Activated CD4-positive, alpha-beta T cell treated with anti-CD3 and anti-CD28 coated beads, Interleukin-2, amount 10 ng/mL, durations not matched to agents 7 days and 5 days (primary cell): ENCODE measurements at regions of chr4 and their contacts with region 1.

Region 1: GRCh38 chr4:75514131-75514948 is at the starts of genes RCHY1 and THAP6:
- DNase-seq: peak; percentile 95
- H3K4me3 Mint-ChIP-seq: no peak within 1 kb of the TSS
- H3K27ac Mint-ChIP-seq: peak within 1 kb of the TSS; percentile 99
- H3K4me1 Mint-ChIP-seq: peaks cover 46% of the 10 kb centered on the region
- H3K27me3 Mint-ChIP-seq: no peaks in the 10 kb centered on the region
- total RNA-seq, gene RCHY1: 23.5 to 27.1 TPM
- total RNA-seq, gene THAP6: 17.8 to 19.6 TPM

Region 2: DNA sequence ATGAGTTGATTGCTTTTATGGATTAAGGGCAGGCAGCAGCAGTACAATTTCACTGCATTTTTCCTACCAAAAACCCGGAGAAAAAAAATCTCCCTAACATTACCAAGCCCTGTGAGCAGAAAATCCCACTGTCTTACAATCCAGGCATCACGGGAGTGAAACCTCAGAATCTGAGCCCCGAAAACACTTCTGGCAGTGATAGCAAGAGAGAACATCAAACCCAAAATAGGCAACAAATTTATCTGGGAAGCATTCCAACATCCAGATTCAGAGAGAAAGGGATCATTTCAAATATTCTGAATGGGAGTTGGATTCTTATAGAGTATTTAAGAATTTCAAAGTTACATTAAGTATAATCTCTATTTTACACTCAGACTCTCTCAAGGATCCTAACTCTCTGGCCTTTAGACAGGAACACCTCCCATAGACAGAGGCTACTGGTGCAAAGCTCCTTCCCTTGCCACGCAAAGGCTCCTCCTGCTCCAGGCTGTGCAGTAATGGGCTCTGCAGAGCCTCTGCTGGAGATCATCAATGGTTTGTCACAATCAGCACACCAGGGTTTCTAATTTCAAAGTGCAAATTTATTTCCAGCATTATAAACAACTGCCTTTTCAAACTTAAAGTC is 324.5 kb before region 1 on chr4:
- CTCF ChIA-PET with region 1: no interaction called
- POLR2A ChIA-PET with region 1: no interaction called
- DNase-seq: no peak
- H3K4me3 Mint-ChIP-seq: no peak overlapping the region
- H3K27ac Mint-ChIP-seq: no peak overlapping the region
- H3K4me1 Mint-ChIP-seq: no peaks in the 10 kb centered on the region
- H3K27me3 Mint-ChIP-seq: no peaks in the 10 kb centered on the region

Region 3: DNA sequence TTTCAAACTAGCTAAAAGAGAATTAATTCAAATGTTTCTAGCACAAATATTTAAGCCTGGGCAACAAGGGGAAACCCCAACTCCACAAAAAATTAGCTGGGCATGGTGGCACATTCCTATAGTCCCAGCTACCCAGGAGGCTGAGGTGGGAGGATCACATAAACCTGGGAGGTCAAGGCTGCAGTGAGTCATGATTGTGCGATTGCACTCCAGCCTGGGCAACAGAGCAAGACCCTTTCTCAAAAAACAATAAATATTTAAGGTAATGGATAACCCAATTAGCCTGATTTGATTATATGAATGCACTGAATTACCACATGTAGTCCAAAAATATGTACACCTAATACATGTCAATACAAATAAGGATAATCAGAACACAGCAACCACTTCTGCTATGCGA is 14.4 kb before region 1 on chr4:
- CTCF ChIA-PET with region 1: interaction called, 11 read pairs
- POLR2A ChIA-PET with region 1: no interaction called
- DNase-seq: no peak
- H3K4me3 Mint-ChIP-seq: no peak overlapping the region
- H3K27ac Mint-ChIP-seq: no peak overlapping the region
- H3K4me1 Mint-ChIP-seq: peaks cover 19% of the 10 kb centered on the region
- H3K27me3 Mint-ChIP-seq: no peaks in the 10 kb centered on the region

Region 4: DNA sequence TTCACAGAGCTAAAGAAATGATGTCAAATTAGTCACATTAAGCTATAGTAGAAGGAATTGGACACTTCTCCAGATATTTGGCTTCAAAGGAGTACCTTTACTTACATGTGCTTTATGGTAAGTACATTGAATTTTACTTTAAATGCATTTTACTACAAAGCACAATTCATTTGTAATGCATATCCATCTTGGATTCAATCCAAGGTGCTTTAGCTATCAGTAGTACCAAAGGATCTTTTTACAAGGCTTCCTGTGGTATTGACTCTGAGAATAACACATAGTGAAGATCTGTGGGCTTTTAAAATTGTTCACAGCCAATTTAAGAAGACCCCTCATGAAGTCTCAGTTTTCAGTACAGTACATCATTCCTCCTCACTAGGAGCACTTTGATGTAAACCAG is 13.1 kb after region 1 on chr4:
- CTCF ChIA-PET with region 1: interaction called, 15 read pairs
- POLR2A ChIA-PET with region 1: interaction called, 3 read pairs
- DNase-seq: no peak
- H3K4me3 Mint-ChIP-seq: no peak overlapping the region
- H3K27ac Mint-ChIP-seq: no peak overlapping the region
- H3K4me1 Mint-ChIP-seq: peaks cover 8% of the 10 kb centered on the region
- H3K27me3 Mint-ChIP-seq: no peaks in the 10 kb centered on the region

Region 5: GRCh38 chr4:75547647-75548387 is 33.5 kb after region 1 on chr4:
- CTCF ChIA-PET with region 1: no interaction called
- POLR2A ChIA-PET with region 1: no interaction called
- DNase-seq: no peak
- H3K4me3 Mint-ChIP-seq: no peak overlapping the region
- H3K27ac Mint-ChIP-seq: no peak overlapping the region
- H3K4me1 Mint-ChIP-seq: no peaks in the 10 kb centered on the region
- H3K27me3 Mint-ChIP-seq: no peaks in the 10 kb centered on the region